Activated B cell treated with CpG ODN at 0.5 μM for 24 hours (primary cell): ENCODE measurements at regions of chr2 and their contacts with region 1.

Region 1: GRCh38 chr2:31255911-31256571 is 22.1 kb downstream of the EHD3 start:
- DNase-seq: peak; percentile 58
- ATAC-seq: peak; percentile 70
- H3K4me3 Mint-ChIP-seq: peak overlapping the region; percentile 72
- H3K27ac Mint-ChIP-seq: peak overlapping the region; percentile 84
- H3K4me1 Mint-ChIP-seq: peaks cover 85% of the 10 kb centered on the region
- H3K27me3 Mint-ChIP-seq: no peaks in the 10 kb centered on the region
- CTCF ChIP-seq: no peak

Region 2: GRCh38 chr2:30862054-30862651 is 393.9 kb before region 1 on chr2:
- CTCF ChIA-PET with region 1: no interaction called
- POLR2A ChIA-PET with region 1: no interaction called
- intact Hi-C with region 1: loop called (anchors 5 kb)
- DNase-seq: no peak
- ATAC-seq: peak; percentile 76
- H3K4me3 Mint-ChIP-seq: no peak overlapping the region
- H3K27ac Mint-ChIP-seq: no peak overlapping the region
- H3K4me1 Mint-ChIP-seq: peaks cover 18% of the 10 kb centered on the region
- H3K27me3 Mint-ChIP-seq: peaks cover 2% of the 10 kb centered on the region
- CTCF ChIP-seq: no peak

Region 3: GRCh38 chr2:31207790-31208189 is 48.3 kb before region 1 on chr2:
- CTCF ChIA-PET with region 1: interaction called, 7 read pairs
- POLR2A ChIA-PET with region 1: interaction called, 13 read pairs
- intact Hi-C with region 1: loop called (anchors 2 kb)
- DNase-seq: no peak
- ATAC-seq: peak; percentile 49
- H3K4me3 Mint-ChIP-seq: peak overlapping the region; percentile 15
- H3K27ac Mint-ChIP-seq: no peak overlapping the region
- H3K4me1 Mint-ChIP-seq: peaks cover 20% of the 10 kb centered on the region
- H3K27me3 Mint-ChIP-seq: no peaks in the 10 kb centered on the region
- CTCF ChIP-seq: no peak

Region 4: DNA sequence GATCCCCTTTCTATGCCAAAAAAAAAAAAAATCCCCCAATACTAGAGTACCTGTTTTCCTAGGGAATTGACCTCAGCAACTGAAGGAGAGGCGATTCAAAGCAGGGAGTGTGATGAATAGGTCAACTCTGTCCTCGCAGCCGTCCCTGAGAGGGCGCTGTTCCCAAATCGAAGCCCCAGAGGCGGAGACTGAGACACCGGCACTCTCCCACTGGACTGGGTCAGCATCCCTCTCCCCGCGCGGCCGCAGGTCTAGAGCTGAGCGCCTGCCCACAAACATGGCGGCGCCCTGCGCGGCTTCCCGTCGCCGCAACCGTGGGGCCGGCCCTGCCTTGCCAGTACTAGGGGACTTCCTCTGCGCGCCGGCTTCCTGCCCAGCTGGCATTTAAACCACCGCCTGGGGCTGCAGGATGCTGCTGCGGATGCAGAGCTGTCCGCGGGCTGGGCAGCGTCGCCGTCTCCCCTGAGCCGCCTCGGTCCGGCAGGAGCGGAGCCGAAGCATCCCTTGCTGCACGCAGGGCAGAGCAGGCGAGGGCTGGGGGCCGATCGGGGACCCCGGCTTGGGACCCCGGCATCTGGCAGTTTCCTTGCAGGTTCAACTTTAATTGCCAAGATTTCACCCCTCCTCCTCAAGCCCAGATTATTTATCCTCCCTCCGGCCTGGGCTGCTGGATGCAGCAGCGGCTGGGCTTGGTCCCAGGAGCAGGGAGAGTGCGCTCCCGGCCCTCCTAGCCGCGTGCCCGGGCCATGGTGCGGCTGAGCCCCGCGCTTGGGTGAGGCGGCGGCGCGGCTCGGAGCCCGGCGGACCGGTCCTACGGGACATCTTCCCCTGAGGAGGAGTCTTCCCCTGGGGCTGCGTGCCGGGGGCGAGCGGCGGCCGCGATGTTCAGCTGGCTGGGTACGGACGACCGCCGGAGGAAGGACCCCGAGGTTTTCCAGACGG is 22.0 kb before region 1 on chr2 and contains the start of gene EHD3:
- CTCF ChIA-PET with region 1: interaction called, 16 read pairs
- POLR2A ChIA-PET with region 1: interaction called, 37 read pairs
- intact Hi-C with region 1: loop called (anchors 1 kb)
- DNase-seq: peak; percentile 85
- ATAC-seq: peak; percentile 98
- H3K4me3 Mint-ChIP-seq: peak within 1 kb of the TSS; percentile 85
- H3K27ac Mint-ChIP-seq: peak within 1 kb of the TSS; percentile 82
- H3K4me1 Mint-ChIP-seq: peaks cover 44% of the 10 kb centered on the region
- H3K27me3 Mint-ChIP-seq: no peaks in the 10 kb centered on the region
- CTCF ChIP-seq: no peak
- total RNA-seq, gene EHD3: 38.1 and 40.3 TPM in 2 replicates

Region 5: GRCh38 chr2:31318361-31319336 is 62.6 kb after region 1 on chr2:
- CTCF ChIA-PET with region 1: interaction called, 4 read pairs
- POLR2A ChIA-PET with region 1: interaction called, 7 read pairs
- intact Hi-C with region 1: loop called (anchors 1 kb)
- DNase-seq: peak; percentile 60
- ATAC-seq: peak; percentile 97
- H3K4me3 Mint-ChIP-seq: peak overlapping the region; percentile 66
- H3K27ac Mint-ChIP-seq: peak overlapping the region; percentile 83
- H3K4me1 Mint-ChIP-seq: peaks cover 51% of the 10 kb centered on the region
- H3K27me3 Mint-ChIP-seq: no peaks in the 10 kb centered on the region
- CTCF ChIP-seq: no peak